ENCODE measurements at regions of chr10 and their contacts with region 1.

Region 1: DNA sequence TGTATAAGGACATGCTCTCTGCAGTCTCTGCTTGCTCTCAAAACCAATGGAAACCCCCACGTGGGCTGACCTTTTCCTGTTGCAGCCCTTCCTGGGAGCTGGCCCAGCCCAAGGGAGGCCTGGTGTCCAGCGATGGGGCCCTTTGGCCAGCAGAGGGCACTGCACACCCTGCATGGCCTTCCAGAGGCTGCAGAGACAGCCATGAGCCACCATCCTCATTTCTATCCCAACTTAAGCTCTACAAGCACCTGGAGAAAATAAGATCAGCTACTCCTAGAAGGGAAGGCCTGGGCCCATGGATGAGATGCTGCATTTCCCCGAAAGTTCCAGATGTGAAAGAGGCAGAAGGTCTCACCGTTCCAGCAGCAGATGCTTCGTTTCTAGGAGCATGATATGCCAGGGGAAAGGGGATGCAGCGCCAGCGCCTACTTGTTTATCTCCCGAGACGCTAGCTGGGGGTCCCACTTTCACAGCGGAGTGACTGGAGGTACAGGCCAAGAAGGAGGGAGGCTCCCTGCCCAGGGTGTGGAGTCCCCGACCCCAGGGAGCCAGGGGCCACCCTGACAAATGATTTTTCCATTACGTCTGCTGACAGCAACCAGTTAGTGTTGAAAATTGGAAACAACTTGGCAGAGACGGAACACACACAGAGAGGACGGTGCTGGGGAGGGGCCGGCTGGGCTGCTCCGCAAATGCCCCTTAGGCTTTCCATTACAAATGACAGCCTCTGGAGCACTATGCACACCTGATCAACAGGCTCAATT is 106.4 kb downstream of the ZRANB1 start:
- DNase-seq: peak; percentile 88
- H3K4me3 ChIP-seq: peak overlapping the region in 1 of 2 experiments; percentile 38; a peak in 1 of 4 replicates
- H3K27ac ChIP-seq: peak overlapping the region in 1 of 2 experiments; percentile 80; a peak in 2 of 4 replicates
- H3K4me1 ChIP-seq: peaks cover 24 to 47% of the 10 kb centered on the region in 2 experiments; a peak in 2 of 4 replicates
- H3K27me3 ChIP-seq: no peaks in the 10 kb centered on the region
- CTCF ChIP-seq: peak; percentile 97
- EP300 ChIP-seq: no peak
- RAD21 ChIP-seq: peak; percentile 86

Region 2: DNA sequence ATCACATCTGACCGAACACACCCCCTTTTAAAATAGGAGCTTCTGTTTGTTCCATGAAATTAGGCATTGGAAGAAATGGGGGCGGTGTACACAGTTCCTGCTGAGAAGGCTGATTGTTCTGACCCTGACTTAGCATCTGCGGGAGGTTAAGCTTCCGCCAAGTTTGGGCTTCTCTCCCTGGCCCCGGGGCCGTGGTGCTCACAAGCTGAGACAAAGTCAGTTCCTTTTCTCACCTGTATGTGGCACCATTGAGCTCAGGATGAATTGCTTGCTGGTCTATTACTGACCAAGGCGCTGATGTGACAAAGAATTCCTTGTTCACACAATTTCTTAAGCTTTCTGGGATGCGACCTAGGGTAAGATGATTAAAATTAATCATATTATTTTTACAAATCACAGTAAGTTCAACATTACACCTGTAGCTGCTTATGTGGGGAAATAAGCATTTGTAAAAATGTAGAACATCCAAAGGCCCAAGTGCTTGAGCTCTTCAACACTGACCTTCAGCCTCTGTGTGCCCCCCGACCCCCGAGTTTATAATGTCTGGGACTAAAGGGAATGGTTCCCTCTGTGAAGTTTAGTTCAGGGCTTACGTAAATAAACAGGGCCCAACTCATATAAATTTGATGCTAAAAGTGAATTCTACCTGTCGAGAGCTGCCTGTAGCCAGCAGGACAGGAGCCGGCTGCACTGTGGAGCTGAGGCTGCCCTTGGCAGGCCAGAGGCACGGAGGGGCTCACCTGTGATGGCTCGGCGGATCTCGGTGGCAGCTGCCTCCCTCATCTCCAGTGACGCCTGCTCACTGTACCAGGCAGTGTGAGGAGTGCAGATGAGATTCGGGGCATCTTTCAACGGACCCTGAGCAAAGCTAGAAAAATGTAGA is 55.6 kb before region 1 on chr10:
- CTCF ChIA-PET with region 1: interaction called, 28 read pairs
- POLR2A ChIA-PET with region 1: no interaction called
- DNase-seq: peak; percentile 59
- H3K4me3 ChIP-seq: no peak overlapping the region
- H3K27ac ChIP-seq: peak overlapping the region; percentile 2 to 14; a peak in 2 of 4 replicates
- H3K4me1 ChIP-seq: no peaks in the 10 kb centered on the region; a peak in 1 of 4 replicates
- H3K27me3 ChIP-seq: no peaks in the 10 kb centered on the region
- CTCF ChIP-seq: peak; percentile 75
- EP300 ChIP-seq: no peak
- RAD21 ChIP-seq: peak; percentile 72

Region 3: GRCh38 chr10:125006921-125007426 is 41.3 kb before region 1 on chr10:
- CTCF ChIA-PET with region 1: interaction called, 30 read pairs
- POLR2A ChIA-PET with region 1: no interaction called
- DNase-seq: peak; percentile 92
- H3K4me3 ChIP-seq: no peak overlapping the region
- H3K27ac ChIP-seq: peak overlapping the region; percentile 12 to 98; a peak in 3 of 4 replicates
- H3K4me1 ChIP-seq: peaks cover 0 to 93% of the 10 kb centered on the region in 2 experiments; a peak in 2 of 4 replicates
- H3K27me3 ChIP-seq: no peaks in the 10 kb centered on the region
- CTCF ChIP-seq: no peak
- EP300 ChIP-seq: peak in 1 of 2 experiments; percentile 65; a peak in 1 of 4 replicates
- RAD21 ChIP-seq: no peak; the same call in 1 of the 2 replicates

Region 4: GRCh38 chr10:125023255-125023654 is 25.0 kb before region 1 on chr10:
- CTCF ChIA-PET with region 1: interaction called, 21 read pairs
- POLR2A ChIA-PET with region 1: no interaction called
- DNase-seq: peak; percentile 90
- H3K4me3 ChIP-seq: peak overlapping the region in 1 of 2 experiments; percentile 18; a peak in 1 of 4 replicates
- H3K27ac ChIP-seq: peak overlapping the region; percentile 67 to 100; a peak in 3 of 4 replicates
- H3K4me1 ChIP-seq: peaks cover 32 to 80% of the 10 kb centered on the region in 2 experiments
- H3K27me3 ChIP-seq: no peaks in the 10 kb centered on the region
- CTCF ChIP-seq: no peak
- EP300 ChIP-seq: peak in 1 of 2 experiments; percentile 72; a peak in 2 of 4 replicates
- RAD21 ChIP-seq: 0 out of 2 replicates have a peak, but pooled peaks have one; percentile 9

Region 5: DNA sequence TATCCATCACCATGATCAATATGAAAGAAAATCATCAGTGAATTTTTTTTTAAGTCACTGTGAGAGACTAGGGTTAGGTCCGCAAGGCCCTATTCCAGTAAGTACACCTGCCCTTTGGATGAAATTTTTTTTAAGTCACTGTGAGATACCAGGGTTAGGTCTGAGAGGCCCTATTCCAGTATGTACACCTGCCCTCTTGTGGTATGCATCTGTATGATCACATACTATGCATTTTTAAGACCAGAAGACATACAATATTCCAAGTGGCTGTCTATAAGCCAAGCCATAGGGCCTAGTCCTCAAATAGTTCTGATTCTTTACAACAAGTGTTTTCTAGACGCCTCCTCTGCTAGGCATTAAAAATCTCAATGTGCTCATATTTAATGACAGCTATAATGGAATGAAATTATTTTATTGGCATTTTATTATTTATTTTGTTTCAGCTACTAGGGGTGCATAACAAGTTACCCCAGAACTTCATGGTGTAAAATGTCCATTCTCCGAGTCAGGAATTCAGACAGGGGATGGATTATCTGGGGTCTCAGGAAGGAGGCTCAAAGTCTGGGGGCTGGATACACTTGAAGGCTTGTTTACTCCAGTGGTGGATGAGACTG is 581.6 kb after region 1 on chr10:
- CTCF ChIA-PET with region 1: interaction called, 13 read pairs
- POLR2A ChIA-PET with region 1: no interaction called
- DNase-seq: peak; percentile 66
- H3K4me3 ChIP-seq: no peak overlapping the region
- H3K27ac ChIP-seq: no peak overlapping the region
- H3K4me1 ChIP-seq: peaks cover 0 to 4% of the 10 kb centered on the region in 2 experiments; a peak in 3 of 4 replicates
- H3K27me3 ChIP-seq: no peaks in the 10 kb centered on the region
- CTCF ChIP-seq: peak; percentile 37
- EP300 ChIP-seq: no peak
- RAD21 ChIP-seq: peak; percentile 87